Sciatic nerve (tissue), 2 donors: ENCODE measurements at regions of chr4 and their contacts with region 1.

Region 1: GRCh38 chr4:7192252-7193029 is at the start of gene SORCS2:
- DNase-seq: peak; percentile 84
- ATAC-seq: peak; percentile 59
- total RNA-seq, gene SORCS2: 52.5 TPM

Region 2: DNA sequence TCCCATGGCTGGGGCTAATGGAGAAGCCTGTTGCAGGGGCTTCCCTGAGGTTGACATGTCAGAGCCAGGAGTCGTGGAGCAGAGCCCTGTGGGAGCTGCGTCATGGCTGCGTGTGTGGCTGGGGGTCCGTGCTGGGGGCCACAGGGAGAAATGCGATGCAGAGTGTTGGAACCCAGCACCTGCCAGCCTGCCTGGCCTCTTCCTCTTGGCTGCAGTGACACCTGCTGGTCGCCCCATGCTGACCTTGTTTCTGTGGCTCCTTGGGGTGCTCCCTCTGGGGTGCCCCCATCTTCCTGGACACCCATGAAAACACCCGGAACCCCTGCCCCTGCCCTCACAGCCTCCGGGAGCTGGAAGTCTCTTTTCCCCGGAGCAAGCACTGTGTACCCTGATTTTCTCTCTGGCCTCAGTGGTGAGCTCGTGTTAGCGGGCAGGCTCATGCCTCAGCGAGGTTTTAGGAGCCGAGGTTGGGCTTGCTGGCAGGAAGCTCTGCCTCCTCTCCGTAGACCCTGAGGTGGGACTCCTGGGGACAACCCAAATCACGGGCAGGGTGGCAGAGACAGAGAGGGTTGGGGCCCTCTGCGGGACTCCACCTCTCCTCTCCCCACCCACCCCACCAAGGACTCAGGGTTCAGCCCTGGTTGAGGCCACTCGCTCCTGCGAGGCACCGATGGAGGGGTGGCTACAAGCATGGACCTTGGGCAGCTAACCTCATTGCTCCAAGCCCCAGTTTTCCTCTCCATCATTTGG is 103.6 kb after region 1 on chr4:
- intact Hi-C with region 1: loop called (anchors 5 kb)
- DNase-seq: peak; percentile 77
- ATAC-seq: peak; percentile 72

Region 3: GRCh38 chr4:7434766-7435150 is 242.3 kb after region 1 on chr4 and contains the start of gene PSAPL1:
- intact Hi-C with region 1: no loop called
- DNase-seq: no peak
- ATAC-seq: peak; percentile 73
- total RNA-seq, gene PSAPL1: 0.09 TPM

Region 4: GRCh38 chr4:7719354-7720174 is 527.1 kb after region 1 on chr4:
- intact Hi-C with region 1: loop called (anchors 5 kb)
- DNase-seq: peak; percentile 87
- ATAC-seq: peak; percentile 77